ENCODE measurements at regions of chr6 and their contacts with region 1.

Region 1: GRCh38 chr6:135183532-135184440 is 2.7 kb downstream of the MYB start:
- DNase-seq: peak; percentile 80
- ATAC-seq: peak; percentile 51
- H3K4me3 Mint-ChIP-seq: peak overlapping the region; percentile 97
- H3K27ac Mint-ChIP-seq: peak overlapping the region; percentile 78
- H3K4me1 Mint-ChIP-seq: peaks cover 20% of the 10 kb centered on the region
- H3K27me3 Mint-ChIP-seq: no peaks in the 10 kb centered on the region

Region 2: DNA sequence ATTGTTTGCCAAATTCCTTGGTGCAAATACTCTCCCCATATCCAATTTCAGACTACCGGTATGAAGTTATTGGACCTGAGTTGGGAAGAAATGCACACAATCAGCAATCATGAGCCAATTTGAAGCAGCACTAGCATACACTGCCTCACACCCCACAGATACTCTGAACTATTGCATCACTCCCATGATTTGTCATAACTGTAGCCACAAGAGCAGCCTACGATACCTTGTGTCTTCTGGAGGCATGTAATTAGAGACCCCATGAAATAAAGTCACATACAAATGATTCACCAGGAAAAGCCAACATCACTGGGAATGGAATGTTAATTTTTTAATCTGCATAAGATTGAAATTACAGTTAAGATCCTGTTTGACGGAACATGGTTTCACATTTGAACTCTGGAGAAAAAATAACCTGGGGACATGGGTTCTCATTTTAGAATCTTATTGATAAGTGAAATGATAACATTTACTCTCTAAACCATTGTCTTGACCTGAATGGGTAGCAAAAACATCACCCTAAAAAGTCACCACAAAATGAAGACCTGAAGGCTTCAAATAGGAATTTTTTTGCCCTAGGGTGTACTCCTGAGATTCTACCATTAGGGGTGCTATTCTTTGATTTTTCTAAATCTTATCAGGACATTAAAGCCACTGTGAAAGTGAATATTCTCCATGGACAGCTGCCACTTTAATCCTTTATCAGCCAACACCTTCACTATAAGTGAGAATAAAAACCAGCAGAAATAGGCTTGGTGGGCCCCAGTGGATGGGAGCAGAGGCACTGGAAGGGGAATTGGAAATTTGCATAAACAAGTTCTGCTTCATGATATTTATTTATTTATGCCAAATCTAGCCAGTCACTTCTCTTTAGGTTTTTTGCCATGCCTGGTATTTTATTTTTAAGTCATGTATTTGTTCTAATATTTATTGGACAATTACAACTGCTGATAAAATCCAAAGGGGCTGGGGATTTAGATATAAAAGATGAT is 94.7 kb before region 1 on chr6:
- POLR2A ChIA-PET with region 1: interaction called, 28 read pairs
- DNase-seq: no peak
- ATAC-seq: peak; percentile 83
- H3K4me3 Mint-ChIP-seq: peak overlapping the region; percentile 79
- H3K27ac Mint-ChIP-seq: peak overlapping the region; percentile 95
- H3K4me1 Mint-ChIP-seq: peaks cover 68% of the 10 kb centered on the region
- H3K27me3 Mint-ChIP-seq: no peaks in the 10 kb centered on the region

Region 3: GRCh38 chr6:135145063-135145800 is 38.6 kb before region 1 on chr6:
- POLR2A ChIA-PET with region 1: interaction called, 11 read pairs
- DNase-seq: no peak
- ATAC-seq: peak; percentile 68
- H3K4me3 Mint-ChIP-seq: peak overlapping the region; percentile 75
- H3K27ac Mint-ChIP-seq: peak overlapping the region; percentile 89
- H3K4me1 Mint-ChIP-seq: peaks cover 48% of the 10 kb centered on the region
- H3K27me3 Mint-ChIP-seq: no peaks in the 10 kb centered on the region

Region 4: DNA sequence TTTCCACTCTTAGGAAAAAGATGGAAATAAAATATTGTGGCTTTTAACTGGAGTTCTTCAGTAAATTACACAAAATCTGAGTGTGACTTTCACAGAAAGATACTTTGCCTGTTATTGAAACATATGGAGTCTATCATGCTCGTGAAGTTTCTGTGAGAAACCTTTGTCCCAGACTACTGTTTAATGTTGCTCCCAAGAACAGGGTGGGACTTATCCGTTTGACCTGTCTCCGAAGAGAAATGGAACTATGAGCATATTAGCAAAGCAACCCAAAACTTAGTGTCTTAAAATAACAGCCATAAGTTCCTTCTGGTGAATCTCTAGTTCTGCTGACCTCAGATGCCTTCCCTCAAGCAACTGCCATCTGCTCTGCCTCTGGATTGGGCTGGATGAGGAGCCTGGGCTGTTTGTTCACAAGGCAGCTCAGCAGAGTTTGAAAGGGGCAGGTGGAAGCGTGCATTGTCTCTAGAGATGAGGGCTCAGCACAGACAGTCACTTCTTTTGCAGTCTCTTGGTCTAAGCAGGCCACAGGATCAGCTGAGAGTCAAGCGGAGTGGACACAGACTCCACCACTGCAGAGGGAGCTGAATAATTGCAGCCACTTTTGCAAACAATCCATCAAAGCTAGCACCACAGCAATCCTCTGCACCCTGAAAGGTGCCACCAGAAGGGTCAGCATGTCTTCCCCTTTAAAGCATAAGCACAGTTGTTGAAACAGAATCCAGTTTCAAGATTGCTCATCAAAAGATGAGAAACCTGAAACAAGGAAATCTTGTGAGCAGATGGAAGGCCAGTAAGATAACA is 50.1 kb after region 1 on chr6:
- POLR2A ChIA-PET with region 1: no interaction called
- DNase-seq: no peak
- ATAC-seq: no peak
- H3K4me3 Mint-ChIP-seq: no peak overlapping the region
- H3K27ac Mint-ChIP-seq: no peak overlapping the region
- H3K4me1 Mint-ChIP-seq: peaks cover 19% of the 10 kb centered on the region
- H3K27me3 Mint-ChIP-seq: no peaks in the 10 kb centered on the region

Region 5: GRCh38 chr6:135465307-135465706 is 281.5 kb after region 1 on chr6:
- POLR2A ChIA-PET with region 1: no interaction called
- DNase-seq: no peak
- ATAC-seq: no peak
- H3K4me3 Mint-ChIP-seq: no peak overlapping the region
- H3K27ac Mint-ChIP-seq: no peak overlapping the region
- H3K4me1 Mint-ChIP-seq: no peaks in the 10 kb centered on the region
- H3K27me3 Mint-ChIP-seq: no peaks in the 10 kb centered on the region

Measured in activated naive CD8-positive, alpha-beta T cell treated with anti-CD3 and anti-CD28 coated beads, Interleukin-2, amount 10 ng/mL, durations not matched to agents 7 days and 5 days (primary cell).